MCF 10A (cell line): ENCODE measurements at regions of chr18 and their contacts with region 1.

Region 1: GRCh38 chr18:43886341-43886740 is 609.1 kb upstream of the SYT4 start:
- DNase-seq: peak; percentile 57
- H3K4me3 Mint-ChIP-seq: no peak overlapping the region
- H3K27ac Mint-ChIP-seq: no peak overlapping the region
- H3K4me1 Mint-ChIP-seq: peaks cover 18% of the 10 kb centered on the region
- H3K27me3 Mint-ChIP-seq: no peaks in the 10 kb centered on the region
- CTCF ChIP-seq: no peak

Region 2: GRCh38 chr18:43869451-43870008 is 16.8 kb before region 1 on chr18:
- CTCF ChIA-PET with region 1: no interaction called
- POLR2A ChIA-PET with region 1: interaction called, 19 read pairs
- intact Hi-C with region 1: no loop called
- DNase-seq: peak; percentile 58
- H3K4me3 Mint-ChIP-seq: peak overlapping the region; percentile 30
- H3K27ac Mint-ChIP-seq: peak overlapping the region; percentile 44
- H3K4me1 Mint-ChIP-seq: peaks cover 9% of the 10 kb centered on the region
- H3K27me3 Mint-ChIP-seq: no peaks in the 10 kb centered on the region
- CTCF ChIP-seq: no peak